MCF 10A (cell line): ENCODE measurements at regions of chr16 and their contacts with region 1.

Region 1: GRCh38 chr16:54957403-54958171 is 26.9 kb downstream of the IRX5 start:
- DNase-seq: peak; percentile 68
- H3K4me3 Mint-ChIP-seq: no peak overlapping the region
- H3K27ac Mint-ChIP-seq: no peak overlapping the region
- H3K4me1 Mint-ChIP-seq: peaks cover 3% of the 10 kb centered on the region
- H3K27me3 Mint-ChIP-seq: no peaks in the 10 kb centered on the region
- CTCF ChIP-seq: peak; percentile 42

Region 2: DNA sequence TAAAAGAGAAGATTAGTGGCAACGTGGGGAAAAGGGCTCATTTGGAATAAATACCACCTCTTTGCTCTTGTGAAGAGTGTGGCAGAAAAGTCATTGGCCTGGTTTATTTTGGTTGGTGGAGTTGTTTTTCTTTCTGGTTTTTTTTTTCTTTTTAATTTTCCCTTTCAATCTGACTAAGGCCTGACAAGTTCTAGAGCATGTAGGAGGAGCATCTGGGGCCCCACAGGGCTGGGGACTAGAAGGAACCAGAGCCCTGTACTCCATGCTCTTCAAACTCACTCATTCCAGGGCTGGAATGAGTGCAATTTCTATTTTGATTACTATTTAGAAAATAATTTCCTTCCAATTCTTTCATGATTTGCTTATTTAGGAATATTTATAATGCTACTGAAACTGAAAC is 13.6 kb before region 1 on chr16:
- CTCF ChIA-PET with region 1: interaction called, 20 read pairs
- POLR2A ChIA-PET with region 1: interaction called, 4 read pairs
- intact Hi-C with region 1: no loop called
- DNase-seq: no peak
- H3K4me3 Mint-ChIP-seq: no peak overlapping the region
- H3K27ac Mint-ChIP-seq: no peak overlapping the region
- H3K4me1 Mint-ChIP-seq: peaks cover 13% of the 10 kb centered on the region
- H3K27me3 Mint-ChIP-seq: no peaks in the 10 kb centered on the region
- CTCF ChIP-seq: no peak

Region 3: GRCh38 chr16:54996186-54996585 is 38.6 kb after region 1 on chr16:
- CTCF ChIA-PET with region 1: no interaction called
- POLR2A ChIA-PET with region 1: no interaction called
- intact Hi-C with region 1: no loop called
- DNase-seq: no peak
- H3K4me3 Mint-ChIP-seq: no peak overlapping the region
- H3K27ac Mint-ChIP-seq: no peak overlapping the region
- H3K4me1 Mint-ChIP-seq: peaks cover 10% of the 10 kb centered on the region
- H3K27me3 Mint-ChIP-seq: peaks cover 26% of the 10 kb centered on the region
- CTCF ChIP-seq: no peak